Activated B cell treated with CpG ODN at 0.5 μM for 24 hours (primary cell): ENCODE measurements at regions of chr1 and their contacts with region 1.

Region 1: DNA sequence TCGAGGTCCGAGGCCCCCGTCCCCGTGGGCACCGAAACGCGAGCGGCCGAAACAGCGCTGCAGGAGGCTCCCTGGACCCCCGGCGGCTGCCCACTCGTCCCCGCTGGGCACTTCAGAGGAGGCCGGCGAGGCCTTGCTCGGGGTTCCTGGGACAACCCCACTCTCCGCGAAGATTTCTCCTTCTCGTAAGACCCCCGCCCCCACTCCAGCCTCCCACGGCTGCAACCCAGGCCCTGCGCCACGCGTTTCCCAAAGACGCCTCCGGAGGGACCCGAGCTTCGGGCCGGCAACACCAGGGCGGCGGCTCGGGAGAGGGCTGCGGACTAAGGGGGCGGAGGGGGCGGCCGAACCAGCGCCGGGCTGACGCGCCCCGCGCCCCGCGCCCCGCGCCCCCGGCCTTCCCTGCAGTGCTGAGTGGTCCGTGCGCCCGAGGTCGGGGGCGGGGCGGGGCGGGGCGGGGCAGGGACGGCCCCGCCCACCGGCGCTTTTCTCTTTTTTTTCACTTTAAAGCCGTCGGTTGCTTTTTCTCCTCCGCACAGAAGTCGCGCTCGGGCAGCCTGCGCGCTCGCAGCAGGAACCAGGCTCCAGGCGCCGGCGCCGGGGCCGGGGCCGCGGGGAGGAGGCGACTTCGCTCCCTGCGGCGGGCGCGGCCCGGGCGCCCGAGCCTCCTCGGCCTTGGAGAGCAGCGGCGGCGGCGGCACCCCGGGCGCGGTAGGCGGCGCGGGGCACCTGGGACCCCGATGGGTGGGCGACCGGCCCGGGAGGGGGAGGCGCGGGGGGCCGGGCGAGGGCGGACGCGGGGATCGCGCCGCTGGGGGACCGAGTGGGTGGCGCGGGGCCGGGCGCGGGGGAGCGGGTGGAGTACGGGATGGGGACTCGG is at the start of gene SPSB1:
- DNase-seq: peak; percentile 52
- ATAC-seq: peak; percentile 66
- H3K4me3 Mint-ChIP-seq: peak within 1 kb of the TSS; percentile 67
- H3K27ac Mint-ChIP-seq: no peak within 1 kb of the TSS
- H3K4me1 Mint-ChIP-seq: peaks cover 6% of the 10 kb centered on the region
- H3K27me3 Mint-ChIP-seq: no peaks in the 10 kb centered on the region
- CTCF ChIP-seq: no peak
- total RNA-seq, gene SPSB1: 5.8 and 6.1 TPM in 2 replicates

Region 2: GRCh38 chr1:9269078-9269501 is 23.5 kb before region 1 on chr1:
- CTCF ChIA-PET with region 1: interaction called, 13 read pairs
- POLR2A ChIA-PET with region 1: no interaction called
- intact Hi-C with region 1: loop called (anchors 2 kb)
- DNase-seq: no peak
- ATAC-seq: no peak
- H3K4me3 Mint-ChIP-seq: no peak overlapping the region
- H3K27ac Mint-ChIP-seq: no peak overlapping the region
- H3K4me1 Mint-ChIP-seq: no peaks in the 10 kb centered on the region
- H3K27me3 Mint-ChIP-seq: no peaks in the 10 kb centered on the region
- CTCF ChIP-seq: no peak

Region 3: GRCh38 chr1:9413148-9413876 is 120.7 kb after region 1 on chr1:
- CTCF ChIA-PET with region 1: interaction called, 8 read pairs
- POLR2A ChIA-PET with region 1: interaction called, 10 read pairs
- intact Hi-C with region 1: loop called (anchors 2 kb)
- DNase-seq: peak; percentile 54
- ATAC-seq: peak; percentile 76
- H3K4me3 Mint-ChIP-seq: peak overlapping the region; percentile 57
- H3K27ac Mint-ChIP-seq: peak overlapping the region; percentile 84
- H3K4me1 Mint-ChIP-seq: peaks cover 57% of the 10 kb centered on the region
- H3K27me3 Mint-ChIP-seq: no peaks in the 10 kb centered on the region
- CTCF ChIP-seq: no peak

Region 4: GRCh38 chr1:9494929-9495758 is 202.5 kb after region 1 on chr1:
- CTCF ChIA-PET with region 1: interaction called, 137 read pairs
- POLR2A ChIA-PET with region 1: interaction called, 6 read pairs
- intact Hi-C with region 1: loop called (anchors 1 kb)
- DNase-seq: peak; percentile 65
- ATAC-seq: peak; percentile 81
- H3K4me3 Mint-ChIP-seq: peak overlapping the region; percentile 80
- H3K27ac Mint-ChIP-seq: no peak overlapping the region
- H3K4me1 Mint-ChIP-seq: peaks cover 10% of the 10 kb centered on the region
- H3K27me3 Mint-ChIP-seq: peaks cover 15% of the 10 kb centered on the region
- CTCF ChIP-seq: peak; percentile 69

Region 5: DNA sequence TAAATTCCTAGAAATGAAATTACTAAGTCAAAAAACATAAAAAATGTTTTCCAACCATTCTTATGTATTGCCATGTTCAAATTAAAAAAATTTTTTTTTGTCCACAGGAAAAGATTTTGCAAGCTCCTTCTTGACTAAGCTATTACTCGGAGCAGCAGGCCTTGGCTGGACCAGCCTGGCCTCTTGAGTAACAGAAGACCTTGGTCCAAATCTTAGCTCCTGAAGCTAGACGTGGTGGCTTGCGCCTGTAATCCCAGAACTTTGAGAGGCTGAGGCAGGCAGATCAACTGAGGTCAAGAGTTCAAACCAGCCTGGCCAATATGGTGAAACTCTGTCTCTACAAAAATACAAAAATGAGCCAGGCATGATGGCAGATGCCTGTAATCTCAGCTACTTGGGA is 453.6 kb after region 1 on chr1:
- CTCF ChIA-PET with region 1: no interaction called
- POLR2A ChIA-PET with region 1: interaction called, 11 read pairs
- intact Hi-C with region 1: no loop called
- DNase-seq: no peak
- ATAC-seq: no peak
- H3K4me3 Mint-ChIP-seq: no peak overlapping the region
- H3K27ac Mint-ChIP-seq: no peak overlapping the region
- H3K4me1 Mint-ChIP-seq: no peaks in the 10 kb centered on the region
- H3K27me3 Mint-ChIP-seq: no peaks in the 10 kb centered on the region
- CTCF ChIP-seq: no peak